ENCODE measurements at regions of chrX and their contacts with region 1.

Region 1: DNA sequence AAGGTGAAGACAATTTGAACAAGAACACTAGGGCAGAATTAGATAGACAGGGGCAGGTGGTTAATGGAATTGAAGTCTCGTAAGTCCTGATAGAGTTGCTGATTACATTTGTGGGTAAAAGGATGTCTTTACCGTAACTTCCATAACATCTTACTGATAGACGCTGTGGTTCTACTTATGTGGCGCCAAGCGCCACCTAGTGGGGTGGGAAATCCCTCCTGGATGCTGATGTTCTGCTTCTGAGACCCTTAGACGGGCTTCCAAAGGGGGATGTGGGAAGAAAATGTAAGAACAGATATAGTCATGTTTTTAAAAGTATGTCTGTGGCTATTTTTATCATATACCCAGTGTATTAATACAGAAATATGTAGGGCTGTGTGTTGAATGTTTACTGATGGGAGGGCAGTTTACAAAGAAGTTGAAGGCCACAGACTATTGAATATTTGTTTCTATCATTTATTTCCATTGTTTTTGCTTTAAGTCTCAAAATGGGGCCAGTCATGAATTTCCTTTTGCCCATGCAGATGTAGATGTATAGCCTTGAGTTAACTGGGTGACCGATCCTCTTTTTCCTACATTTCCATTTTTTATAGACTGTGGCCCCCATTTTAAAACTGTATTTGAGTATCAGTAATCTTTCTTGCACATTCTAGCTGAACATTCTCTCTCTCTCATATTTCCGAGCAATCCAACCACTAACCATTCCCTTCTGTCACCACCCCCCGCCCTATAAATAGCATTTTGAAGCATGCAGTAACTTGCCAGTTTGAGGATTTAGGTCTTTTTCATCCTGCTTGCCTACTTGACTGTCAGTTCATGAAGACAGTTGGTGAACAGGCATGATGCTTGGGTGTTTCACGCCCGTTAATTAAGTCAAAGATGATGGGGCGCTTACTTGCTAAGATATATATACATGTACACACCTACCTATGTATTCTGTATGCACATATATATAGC is 12.1 kb upstream of the TLR8 start:
- DNase-seq: peak; percentile 84
- H3K4me3 Mint-ChIP-seq: no peak overlapping the region
- H3K27ac Mint-ChIP-seq: peak overlapping the region; percentile 3
- H3K4me1 Mint-ChIP-seq: peaks cover 46% of the 10 kb centered on the region
- H3K27me3 Mint-ChIP-seq: no peaks in the 10 kb centered on the region

Region 2: GRCh38 chrX:11836284-11836683 is 1058.1 kb before region 1 on chrX:
- intact Hi-C with region 1: no loop called
- DNase-seq: no peak
- H3K4me3 Mint-ChIP-seq: no peak overlapping the region
- H3K27ac Mint-ChIP-seq: no peak overlapping the region
- H3K4me1 Mint-ChIP-seq: no peaks in the 10 kb centered on the region
- H3K27me3 Mint-ChIP-seq: no peaks in the 10 kb centered on the region

Region 3: GRCh38 chrX:12383196-12383595 is 511.2 kb before region 1 on chrX:
- intact Hi-C with region 1: no loop called
- DNase-seq: no peak
- H3K4me3 Mint-ChIP-seq: no peak overlapping the region
- H3K27ac Mint-ChIP-seq: no peak overlapping the region
- H3K4me1 Mint-ChIP-seq: no peaks in the 10 kb centered on the region
- H3K27me3 Mint-ChIP-seq: no peaks in the 10 kb centered on the region

Region 4: DNA sequence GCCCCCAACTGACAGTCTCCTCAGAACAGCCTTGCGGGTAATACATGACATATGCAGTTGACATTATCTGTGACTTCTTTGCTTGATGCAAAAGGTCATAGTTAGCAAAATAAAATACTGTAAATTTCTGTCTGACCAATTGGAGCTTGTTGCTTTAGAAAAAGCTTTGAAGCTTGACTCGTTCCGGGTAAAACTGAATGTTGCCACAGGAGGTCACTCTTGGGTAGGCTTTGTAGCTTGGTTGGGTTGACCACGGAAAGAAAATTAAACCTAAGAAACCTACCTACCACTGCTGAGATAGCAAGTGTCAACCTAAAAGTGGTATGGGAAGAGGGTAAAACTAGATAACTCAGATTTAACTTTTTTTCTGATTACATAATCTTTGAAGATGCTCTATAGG is 79.9 kb before region 1 on chrX:
- intact Hi-C with region 1: loop called (anchors 1 kb)
- DNase-seq: peak; percentile 86
- H3K4me3 Mint-ChIP-seq: no peak overlapping the region
- H3K27ac Mint-ChIP-seq: no peak overlapping the region
- H3K4me1 Mint-ChIP-seq: peaks cover 23% of the 10 kb centered on the region
- H3K27me3 Mint-ChIP-seq: no peaks in the 10 kb centered on the region

Region 5: GRCh38 chrX:13235930-13236329 is 341.6 kb after region 1 on chrX:
- intact Hi-C with region 1: no loop called
- DNase-seq: no peak
- H3K4me3 Mint-ChIP-seq: no peak overlapping the region
- H3K27ac Mint-ChIP-seq: no peak overlapping the region
- H3K4me1 Mint-ChIP-seq: no peaks in the 10 kb centered on the region
- H3K27me3 Mint-ChIP-seq: no peaks in the 10 kb centered on the region

Measured in activated CD4-positive, alpha-beta T cell treated with anti-CD3 and anti-CD28 coated beads, Interleukin-2, amount 10 ng/mL, durations not matched to agents 24 days and 14 days (primary cell).